ENCODE measurements at regions of chr20 and their contacts with region 1.

Region 1: DNA sequence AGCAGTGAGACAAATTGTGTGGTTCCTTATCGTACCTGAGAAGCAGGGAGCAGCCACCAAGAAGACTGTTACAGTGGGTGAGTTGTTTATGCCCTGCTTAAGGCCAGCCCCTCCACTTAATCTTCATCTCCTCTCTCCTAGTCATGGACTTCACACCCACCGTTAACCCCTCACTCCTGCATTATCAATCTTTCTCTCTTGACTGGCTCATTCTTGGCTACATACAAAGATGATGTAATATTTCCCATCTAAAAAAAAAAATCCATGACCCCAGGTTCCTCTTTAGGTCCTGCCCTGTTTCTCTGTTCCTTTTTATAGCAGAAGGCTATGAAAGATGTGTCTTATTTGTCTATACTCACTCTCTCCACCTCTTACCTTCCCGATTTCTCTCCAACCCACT is 72.4 kb downstream of the SHLD1 start:
- DNase-seq: no peak
- ATAC-seq: peak; percentile 72
- H3K4me3 Mint-ChIP-seq: no peak overlapping the region
- H3K27ac Mint-ChIP-seq: peak overlapping the region; percentile 38
- H3K4me1 Mint-ChIP-seq: peaks cover 30% of the 10 kb centered on the region
- H3K27me3 Mint-ChIP-seq: no peaks in the 10 kb centered on the region
- CTCF ChIP-seq: no peak

Region 2: DNA sequence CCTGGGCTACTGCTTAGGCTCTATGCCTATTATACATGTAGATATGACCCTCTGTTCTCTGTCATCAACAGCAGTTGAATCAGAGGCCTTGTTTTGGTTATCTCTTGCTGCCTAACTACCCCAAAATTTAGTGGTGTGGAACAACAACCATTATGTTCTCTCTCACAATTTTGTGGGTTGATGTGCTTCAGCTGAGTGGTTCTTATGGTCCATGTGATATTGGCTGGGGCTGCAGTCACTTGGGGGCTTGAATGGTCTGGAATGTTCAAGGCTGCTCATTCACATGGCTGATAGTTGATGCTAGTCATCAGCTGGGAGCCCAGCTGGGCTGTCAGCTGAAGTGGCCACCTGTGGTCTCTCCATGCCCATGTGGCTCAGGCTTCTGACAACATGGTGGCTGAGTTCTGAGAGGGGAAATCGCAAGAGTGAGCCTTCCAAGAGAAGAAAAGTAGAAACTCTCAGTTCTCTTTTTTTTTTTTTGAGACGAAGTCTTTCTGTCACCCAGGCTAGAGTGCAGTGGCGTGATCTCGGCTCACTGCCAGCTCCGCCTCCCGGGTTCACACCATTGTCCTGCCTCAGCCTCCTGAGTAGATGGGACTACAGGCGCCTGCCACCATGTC is 24.6 kb before region 1 on chr20:
- CTCF ChIA-PET with region 1: interaction called, 3 read pairs
- POLR2A ChIA-PET with region 1: interaction called, 6 read pairs
- intact Hi-C with region 1: loop called (anchors 2 kb)
- DNase-seq: peak; percentile 57
- ATAC-seq: peak; percentile 87
- H3K4me3 Mint-ChIP-seq: peak overlapping the region; percentile 63
- H3K27ac Mint-ChIP-seq: peak overlapping the region; percentile 100
- H3K4me1 Mint-ChIP-seq: peaks cover 29% of the 10 kb centered on the region
- H3K27me3 Mint-ChIP-seq: no peaks in the 10 kb centered on the region
- CTCF ChIP-seq: no peak

Region 3: DNA sequence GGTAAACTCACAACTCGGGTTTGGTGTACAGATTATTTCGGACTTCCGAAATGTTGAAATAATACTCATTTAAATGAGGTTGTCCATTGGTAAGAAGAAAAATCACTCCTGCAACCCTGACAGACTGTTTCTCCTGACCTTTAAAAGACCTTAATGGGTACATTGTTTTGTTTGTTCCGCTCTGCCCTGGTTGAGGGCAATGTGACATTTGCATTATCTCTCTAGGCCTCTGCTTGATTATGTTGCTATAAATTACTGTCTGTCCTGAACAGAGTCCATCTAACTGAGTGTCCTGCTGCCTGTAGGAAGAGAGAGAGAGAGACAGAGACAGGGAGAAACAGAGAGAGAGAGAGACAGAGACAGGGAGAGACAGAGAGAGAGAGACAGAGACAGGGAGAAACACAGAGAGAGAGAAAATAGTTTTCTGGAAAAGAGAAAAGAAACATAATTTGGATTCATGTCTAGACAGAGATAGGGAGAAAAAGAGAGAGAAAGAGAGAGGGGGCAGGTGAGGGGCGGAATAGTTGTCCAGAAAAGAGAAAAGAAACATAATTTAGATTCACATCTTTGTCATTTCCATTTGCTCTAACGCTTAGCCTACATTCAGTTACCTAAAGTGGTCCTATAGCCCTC is 10.9 kb after region 1 on chr20:
- CTCF ChIA-PET with region 1: no interaction called
- POLR2A ChIA-PET with region 1: no interaction called
- intact Hi-C with region 1: no loop called
- DNase-seq: no peak
- ATAC-seq: no peak
- H3K4me3 Mint-ChIP-seq: no peak overlapping the region
- H3K27ac Mint-ChIP-seq: no peak overlapping the region
- H3K4me1 Mint-ChIP-seq: peaks cover 15% of the 10 kb centered on the region
- H3K27me3 Mint-ChIP-seq: no peaks in the 10 kb centered on the region
- CTCF ChIP-seq: no peak

Region 4: DNA sequence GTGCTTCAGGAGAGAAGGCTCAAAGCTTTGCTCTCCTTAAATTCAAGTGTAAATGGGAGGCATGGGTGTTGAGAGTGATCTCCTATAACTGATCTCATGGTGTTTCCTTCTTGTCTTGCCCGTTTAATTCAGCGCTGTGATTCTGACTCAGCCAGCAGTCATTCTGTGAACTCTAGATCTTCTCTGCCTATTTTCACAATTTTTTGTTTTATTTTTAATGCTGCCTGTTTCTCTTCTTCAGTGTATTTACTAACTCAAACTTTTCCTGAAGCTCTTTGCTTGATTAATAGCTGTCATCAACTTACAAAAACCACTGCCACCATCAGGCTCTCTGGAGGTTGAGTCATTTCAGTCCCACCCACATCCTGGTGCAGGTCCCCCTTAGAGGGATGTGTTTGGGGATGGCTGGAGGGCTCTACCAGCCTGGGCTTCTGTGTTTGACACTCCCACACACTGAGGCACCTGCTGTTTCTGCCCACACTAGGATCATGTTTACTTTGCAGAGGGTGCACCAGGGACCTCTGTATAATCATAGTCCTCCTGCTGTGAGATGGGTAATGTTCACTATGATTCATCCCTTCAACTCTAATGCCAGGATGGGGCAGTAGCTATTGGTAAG is 21.6 kb after region 1 on chr20:
- CTCF ChIA-PET with region 1: no interaction called
- POLR2A ChIA-PET with region 1: interaction called, 14 read pairs
- intact Hi-C with region 1: no loop called
- DNase-seq: no peak
- ATAC-seq: peak; percentile 67
- H3K4me3 Mint-ChIP-seq: no peak overlapping the region
- H3K27ac Mint-ChIP-seq: no peak overlapping the region
- H3K4me1 Mint-ChIP-seq: peaks cover 21% of the 10 kb centered on the region
- H3K27me3 Mint-ChIP-seq: no peaks in the 10 kb centered on the region
- CTCF ChIP-seq: no peak

Measured in activated B cell treated with CpG ODN at 0.5 μM for 24 hours (primary cell).